Aorta (tissue), 5 donors: ENCODE measurements at regions of chr7 and their contacts with region 1.

Region 1: GRCh38 chr7:41403291-41403690 is 299.6 kb downstream of the INHBA start:
- DNase-seq: no peak
- ATAC-seq: no peak
- H3K4me3 ChIP-seq: no peak overlapping the region
- H3K27ac ChIP-seq: no peak overlapping the region
- H3K4me1 ChIP-seq: no peaks in the 10 kb centered on the region
- H3K27me3 ChIP-seq: no peaks in the 10 kb centered on the region

Region 2: GRCh38 chr7:41292487-41292886 is 110.8 kb before region 1 on chr7:
- intact Hi-C with region 1: loop called in 1 of 2 experiments (anchors 10 kb)
- DNase-seq: no peak
- ATAC-seq: no peak
- H3K4me3 ChIP-seq: no peak overlapping the region
- H3K27ac ChIP-seq: no peak overlapping the region
- H3K4me1 ChIP-seq: no peaks in the 10 kb centered on the region
- H3K27me3 ChIP-seq: no peaks in the 10 kb centered on the region

Region 3: DNA sequence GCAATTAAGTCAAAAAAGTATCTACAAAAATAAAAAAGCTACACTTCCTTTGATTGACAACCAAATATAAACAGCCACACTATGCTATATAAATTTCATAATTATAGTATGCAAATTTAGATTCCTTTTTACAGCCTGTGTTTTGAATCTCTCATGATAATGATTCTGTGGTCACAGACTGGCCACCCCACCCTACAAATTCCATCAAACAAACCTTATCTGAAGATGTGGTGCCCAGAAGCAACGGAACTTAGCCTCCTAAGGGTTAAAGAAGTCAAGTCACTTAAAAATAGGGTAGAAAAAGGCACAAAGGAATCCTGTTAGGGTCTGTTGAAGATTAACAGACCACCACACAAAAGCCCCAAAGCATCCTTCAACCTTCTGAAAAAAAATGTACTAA is 52.2 kb before region 1 on chr7:
- intact Hi-C with region 1: no loop called
- DNase-seq: no peak
- ATAC-seq: no peak
- H3K4me3 ChIP-seq: no peak overlapping the region
- H3K27ac ChIP-seq: no peak overlapping the region
- H3K4me1 ChIP-seq: peaks cover 0 to 3% of the 10 kb centered on the region in 2 donors
- H3K27me3 ChIP-seq: no peaks in the 10 kb centered on the region

Region 4: GRCh38 chr7:41459623-41460261 is 56.5 kb after region 1 on chr7:
- intact Hi-C with region 1: no loop called
- DNase-seq: no peak
- ATAC-seq: peak; percentile 22
- H3K4me3 ChIP-seq: no peak overlapping the region
- H3K27ac ChIP-seq: no peak overlapping the region
- H3K4me1 ChIP-seq: no peaks in the 10 kb centered on the region
- H3K27me3 ChIP-seq: no peaks in the 10 kb centered on the region

Region 5: GRCh38 chr7:41612798-41613197 is 209.5 kb after region 1 on chr7:
- intact Hi-C with region 1: no loop called
- DNase-seq: no peak
- ATAC-seq: no peak
- H3K4me3 ChIP-seq: no peak overlapping the region
- H3K27ac ChIP-seq: no peak overlapping the region
- H3K4me1 ChIP-seq: no peaks in the 10 kb centered on the region
- H3K27me3 ChIP-seq: no peaks in the 10 kb centered on the region

Region 6: DNA sequence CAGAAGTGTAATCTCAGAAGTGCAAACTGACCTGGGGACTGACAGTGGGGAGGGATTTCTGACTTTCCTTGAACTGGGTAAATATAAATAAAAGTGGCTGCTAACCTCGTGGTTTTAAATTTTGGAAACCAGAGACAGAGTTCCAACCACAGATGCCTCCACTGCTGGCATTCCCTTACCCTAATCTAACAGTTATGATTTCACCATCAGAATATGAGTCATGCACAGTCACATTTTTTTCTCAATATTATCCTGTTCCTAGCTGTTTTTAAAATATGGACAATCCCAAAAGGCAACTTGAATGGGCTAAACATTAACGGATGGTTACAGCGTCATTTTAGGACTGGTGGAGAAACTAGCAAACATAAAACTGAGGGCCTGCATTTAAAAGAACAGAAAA is 563.9 kb after region 1 on chr7:
- intact Hi-C with region 1: no loop called
- DNase-seq: no peak
- ATAC-seq: no peak
- H3K4me3 ChIP-seq: no peak overlapping the region
- H3K27ac ChIP-seq: no peak overlapping the region
- H3K4me1 ChIP-seq: peaks cover 0 to 2% of the 10 kb centered on the region in 2 donors
- H3K27me3 ChIP-seq: no peaks in the 10 kb centered on the region